ENCODE measurements at regions of chr10 and their contacts with region 1.

Region 1: DNA sequence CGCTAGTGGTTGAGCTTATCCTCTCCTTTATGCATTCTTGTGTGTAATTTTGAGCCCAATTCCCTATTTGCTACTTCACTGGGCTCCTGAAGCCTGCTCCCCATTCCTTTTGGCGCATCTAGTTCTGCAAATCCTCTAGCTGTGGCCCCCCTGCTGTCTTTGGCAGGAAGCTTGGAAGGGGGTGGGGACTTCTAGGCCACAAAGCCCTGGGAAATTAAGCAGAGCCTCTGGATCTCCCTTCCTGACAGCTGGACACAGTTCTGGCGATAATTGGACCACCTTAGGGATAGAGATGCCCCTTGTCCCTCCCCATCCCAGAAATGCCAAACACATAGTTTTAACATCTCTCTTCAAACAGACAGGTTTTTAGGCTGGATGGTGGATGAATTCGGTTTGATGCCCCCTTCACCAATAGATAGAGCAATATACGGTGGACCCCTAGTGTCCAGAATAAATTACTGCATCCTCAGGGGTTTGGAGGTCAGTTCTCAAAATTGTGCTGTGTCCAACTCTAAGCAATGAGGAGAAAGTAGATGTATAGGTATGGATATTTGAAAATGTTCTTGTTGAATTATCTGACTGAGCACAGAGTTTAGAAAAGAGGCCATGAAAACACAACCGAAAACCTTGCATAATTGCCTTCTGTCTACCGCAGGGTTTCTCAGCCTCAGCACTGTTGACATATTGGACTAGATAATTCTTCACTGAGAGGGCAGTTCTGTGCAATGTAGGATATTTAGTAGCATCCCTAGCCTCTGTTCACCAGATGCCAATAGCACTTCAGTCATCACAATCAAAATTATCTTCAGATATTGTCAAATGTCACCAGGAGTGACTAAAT is 75.5 kb downstream of the PAPSS2 start:
- DNase-seq: no peak
- H3K4me3 ChIP-seq: peak overlapping the region in 9 of 59 donors; percentile 8 to 44 (median 19)
- H3K27ac ChIP-seq: peak overlapping the region in 4 of 59 donors; percentile 23 to 51 (median 38)
- H3K27me3 ChIP-seq: peaks cover 0 to under 1% (median 0%) of the 10 kb centered on the region in 45 donors
- CTCF ChIP-seq: peak; percentile 63 to 85 (median 76)

Region 2: GRCh38 chr10:87531908-87532622 is 203.1 kb before region 1 on chr10:
- intact Hi-C with region 1: loop called (anchors 10 kb)
- DNase-seq: no peak
- H3K4me3 ChIP-seq: peak overlapping the region in 4 of 59 donors; percentile 4 to 13 (median 8)
- H3K27ac ChIP-seq: peak overlapping the region in 48 of 59 donors; percentile 8 to 78 (median 52)
- H3K27me3 ChIP-seq: no peaks in the 10 kb centered on the region
- CTCF ChIP-seq: no peak

Region 3: DNA sequence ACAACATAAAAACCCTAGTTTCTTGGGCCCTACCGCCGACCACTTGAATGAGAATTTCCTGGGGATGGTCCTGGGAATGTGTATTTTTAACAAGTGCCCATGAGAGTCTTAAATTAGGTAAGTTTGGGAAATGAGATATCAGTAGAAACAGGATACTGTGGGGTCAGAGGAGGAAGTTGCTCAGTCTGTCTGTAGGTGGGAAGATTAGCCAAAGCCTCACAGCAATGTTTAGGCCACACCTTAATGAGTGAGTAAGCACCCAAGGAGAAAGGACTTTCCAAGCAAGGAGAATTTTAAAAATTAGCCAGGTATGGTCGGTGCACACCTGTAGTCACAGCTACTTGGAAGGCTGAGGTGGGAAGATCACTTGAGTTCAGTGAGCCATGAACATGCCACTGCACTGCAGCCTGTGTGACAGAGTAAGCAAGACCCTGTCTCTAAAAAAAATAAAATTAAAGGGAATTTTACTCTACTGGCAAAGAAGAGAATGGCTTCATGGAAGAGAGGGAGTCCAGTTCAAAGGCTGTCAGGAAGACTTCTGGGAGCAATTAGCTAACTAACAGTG is 43.6 kb before region 1 on chr10:
- intact Hi-C with region 1: no loop called
- DNase-seq: no peak
- H3K4me3 ChIP-seq: no peak overlapping the region
- H3K27ac ChIP-seq: no peak overlapping the region
- H3K27me3 ChIP-seq: no peaks in the 10 kb centered on the region
- CTCF ChIP-seq: no peak

Measured in dorsolateral prefrontal cortex (tissue), 120 donors.